Activated B cell treated with CpG ODN at 0.5 μM for 24 hours (primary cell): ENCODE measurements at regions of chr1 and their contacts with region 1.

Region 1: GRCh38 chr1:100931716-100932115 is 35.8 kb downstream of the SLC30A7 start:
- DNase-seq: no peak
- ATAC-seq: no peak
- H3K4me3 Mint-ChIP-seq: no peak overlapping the region
- H3K27ac Mint-ChIP-seq: no peak overlapping the region
- H3K4me1 Mint-ChIP-seq: peaks cover 18% of the 10 kb centered on the region
- H3K27me3 Mint-ChIP-seq: no peaks in the 10 kb centered on the region
- CTCF ChIP-seq: no peak

Region 2: DNA sequence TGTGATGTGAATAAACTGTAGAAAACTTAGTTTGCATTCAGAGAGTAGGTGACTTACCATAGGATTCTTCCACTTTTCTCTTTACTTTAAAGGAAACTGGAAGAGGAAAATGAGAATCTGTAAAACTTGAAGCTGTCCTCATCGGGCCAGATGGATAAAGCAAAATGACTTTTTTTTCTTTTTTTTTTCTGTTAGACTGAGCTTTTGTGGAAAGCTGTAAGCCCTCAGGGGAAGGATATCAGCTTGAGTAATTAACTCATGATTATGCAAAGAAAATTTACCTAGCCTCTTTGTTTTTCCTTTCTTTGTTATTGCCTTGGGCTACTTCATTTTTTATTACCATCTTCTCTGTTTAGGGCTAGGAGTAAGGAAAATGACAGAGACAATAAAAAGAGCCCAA is 40.5 kb after region 1 on chr1:
- CTCF ChIA-PET with region 1: no interaction called
- POLR2A ChIA-PET with region 1: no interaction called
- intact Hi-C with region 1: loop called (anchors 5 kb)
- DNase-seq: no peak
- ATAC-seq: no peak
- H3K4me3 Mint-ChIP-seq: no peak overlapping the region
- H3K27ac Mint-ChIP-seq: peak overlapping the region; percentile 31
- H3K4me1 Mint-ChIP-seq: peaks cover 25% of the 10 kb centered on the region
- H3K27me3 Mint-ChIP-seq: no peaks in the 10 kb centered on the region
- CTCF ChIP-seq: no peak